Activated CD4-positive, alpha-beta memory T cell treated with anti-CD3 and anti-CD28 coated beads for 36 hours (primary cell): ENCODE measurements at regions of chr4 and their contacts with region 1.

Region 1: GRCh38 chr4:112938461-112939058 is 110.9 kb upstream of the ANK2 start:
- DNase-seq: no peak
- H3K4me3 Mint-ChIP-seq: no peak overlapping the region
- H3K27ac Mint-ChIP-seq: no peak overlapping the region
- H3K4me1 Mint-ChIP-seq: no peaks in the 10 kb centered on the region
- H3K27me3 Mint-ChIP-seq: peaks cover 7% of the 10 kb centered on the region

Region 2: DNA sequence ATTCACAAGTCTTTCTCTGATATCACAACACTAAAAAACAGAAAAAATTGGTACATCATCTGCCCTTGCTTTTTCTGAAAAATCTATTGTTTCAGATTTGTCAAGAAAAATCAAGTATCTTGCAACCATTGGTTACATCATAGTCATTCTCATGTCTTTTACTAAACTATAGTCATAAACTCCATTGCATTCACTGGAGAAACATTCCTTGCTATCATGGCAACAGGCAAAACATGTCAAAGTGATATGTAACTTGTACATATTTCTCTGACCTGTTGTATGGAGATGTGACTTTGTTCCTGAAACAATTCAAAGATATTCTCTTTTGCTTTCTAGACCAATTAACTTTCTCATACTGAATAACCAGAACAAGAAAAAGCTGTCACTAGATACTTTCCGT is 11.0 kb before region 1 on chr4:
- CTCF ChIA-PET with region 1: interaction called, 14 read pairs
- POLR2A ChIA-PET with region 1: interaction called, 4 read pairs
- intact Hi-C with region 1: no loop called
- DNase-seq: no peak
- H3K4me3 Mint-ChIP-seq: no peak overlapping the region
- H3K27ac Mint-ChIP-seq: no peak overlapping the region
- H3K4me1 Mint-ChIP-seq: no peaks in the 10 kb centered on the region
- H3K27me3 Mint-ChIP-seq: peaks cover 9% of the 10 kb centered on the region

Region 3: GRCh38 chr4:112951362-112952312 is 13.1 kb after region 1 on chr4:
- CTCF ChIA-PET with region 1: interaction called, 22 read pairs
- POLR2A ChIA-PET with region 1: no interaction called
- intact Hi-C with region 1: no loop called
- DNase-seq: no peak
- H3K4me3 Mint-ChIP-seq: no peak overlapping the region
- H3K27ac Mint-ChIP-seq: no peak overlapping the region
- H3K4me1 Mint-ChIP-seq: no peaks in the 10 kb centered on the region
- H3K27me3 Mint-ChIP-seq: peaks cover 11% of the 10 kb centered on the region